Naive thymus-derived CD4-positive, alpha-beta T cell (primary cell): ENCODE measurements at regions of chr7 and their contacts with region 1.

Region 1: DNA sequence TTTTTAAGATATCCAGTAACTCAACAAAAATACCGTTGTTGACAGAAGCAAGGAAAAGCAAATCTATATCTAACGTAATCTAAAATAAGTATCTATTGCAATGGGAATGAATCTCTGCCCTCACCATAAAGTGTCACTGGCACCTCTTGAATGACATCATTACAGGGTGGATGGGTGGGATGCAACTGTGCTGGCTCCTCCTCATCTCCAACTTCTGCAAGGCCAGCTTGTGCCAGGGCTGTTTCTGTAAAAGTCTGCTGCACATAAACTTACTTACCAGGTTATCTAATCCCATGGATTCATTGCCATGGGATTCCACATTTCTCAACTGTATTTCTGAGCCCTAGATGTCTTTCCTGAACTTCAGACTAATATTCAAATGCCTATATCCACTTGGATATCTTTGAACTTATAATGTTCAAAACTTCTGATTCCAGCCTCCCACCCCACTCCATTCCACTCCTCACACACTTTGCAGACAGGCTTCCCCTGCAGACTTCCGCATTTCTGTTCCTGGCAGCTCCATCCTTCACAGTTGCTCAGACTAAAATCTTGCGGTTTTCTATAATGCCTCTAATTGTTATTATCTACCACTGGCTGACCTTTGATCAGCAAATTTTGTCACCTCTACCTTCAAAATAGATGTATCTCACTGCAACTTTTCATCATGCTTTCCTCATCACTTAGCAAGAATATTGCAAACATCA is 10.7 kb downstream of the FGL2 start:
- DNase-seq: no peak
- ATAC-seq: peak; percentile 58
- H3K4me3 ChIP-seq: no peak overlapping the region
- H3K4me3 Mint-ChIP-seq: no peak overlapping the region
- H3K27ac ChIP-seq: no peak overlapping the region
- H3K27ac Mint-ChIP-seq: no peak overlapping the region
- H3K4me1 ChIP-seq: peaks cover 6 to 7% of the 10 kb centered on the region in 2 donors
- H3K4me1 Mint-ChIP-seq: peaks cover 0 to 19% (median 15%) of the 10 kb centered on the region in 7 donors
- H3K27me3 ChIP-seq: no peaks in the 10 kb centered on the region
- H3K27me3 Mint-ChIP-seq: no peaks in the 10 kb centered on the region

Region 2: DNA sequence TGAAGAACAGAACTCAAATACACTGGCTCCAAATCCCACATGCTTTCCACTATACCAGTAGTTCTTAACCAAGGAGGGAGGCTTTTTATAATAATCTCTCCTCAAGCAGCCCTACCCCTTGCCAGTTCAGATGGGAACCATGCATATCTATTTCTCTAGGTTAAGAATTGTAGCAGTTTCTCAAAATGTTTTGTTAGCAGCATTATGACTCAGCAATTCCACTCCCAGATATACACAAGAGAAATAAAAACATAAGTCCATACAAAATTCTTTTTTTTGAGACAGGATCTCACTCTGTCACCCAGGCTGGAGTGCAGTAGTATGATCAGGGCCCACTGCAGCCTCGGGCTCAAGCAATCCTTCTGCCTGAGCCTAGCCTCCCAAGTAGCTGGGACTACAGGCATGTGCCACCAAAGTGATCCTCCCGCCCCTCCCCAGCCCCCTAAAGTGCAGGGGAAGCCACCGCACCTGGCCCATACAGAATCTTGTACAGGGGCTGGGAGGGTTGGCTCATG is 848.2 kb before region 1 on chr7:
- CTCF ChIA-PET with region 1: no interaction called
- POLR2A ChIA-PET with region 1: no interaction called
- intact Hi-C with region 1: no loop called
- DNase-seq: no peak
- ATAC-seq: no peak
- H3K4me3 ChIP-seq: no peak overlapping the region
- H3K4me3 Mint-ChIP-seq: no peak overlapping the region
- H3K27ac ChIP-seq: no peak overlapping the region
- H3K27ac Mint-ChIP-seq: peak overlapping the region in 2 of 9 donors; percentile 9 to 39
- H3K4me1 ChIP-seq: no peaks in the 10 kb centered on the region
- H3K4me1 Mint-ChIP-seq: peaks cover 54 to 80% (median 65%) of the 10 kb centered on the region in 7 donors
- H3K27me3 ChIP-seq: no peaks in the 10 kb centered on the region
- H3K27me3 Mint-ChIP-seq: no peaks in the 10 kb centered on the region

Region 3: DNA sequence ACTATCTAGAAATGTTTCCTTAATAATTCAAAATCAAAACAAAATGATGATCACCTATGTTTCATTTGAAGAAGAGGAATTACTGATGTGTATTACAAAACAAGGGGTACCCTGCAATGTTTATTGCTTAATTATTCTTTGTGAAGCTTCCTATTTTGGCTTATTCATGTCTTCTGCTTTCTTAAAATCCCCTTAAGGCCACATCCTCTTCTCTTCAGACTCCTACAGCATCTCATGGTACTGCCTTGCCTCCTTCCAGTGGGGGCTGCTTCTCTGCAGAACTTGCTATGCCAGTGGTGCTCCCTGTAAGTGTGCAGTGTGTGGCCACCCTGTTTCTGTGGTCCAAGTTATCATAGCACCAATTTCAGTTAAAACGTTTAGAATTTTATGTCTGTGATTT is 31.4 kb before region 1 on chr7:
- CTCF ChIA-PET with region 1: no interaction called
- POLR2A ChIA-PET with region 1: no interaction called
- intact Hi-C with region 1: loop called in 1 of 2 experiments (anchors 2 kb)
- DNase-seq: no peak
- ATAC-seq: peak; percentile 78
- H3K4me3 ChIP-seq: no peak overlapping the region
- H3K4me3 Mint-ChIP-seq: peak overlapping the region in 1 of 10 donors; percentile 61
- H3K27ac ChIP-seq: no peak overlapping the region
- H3K27ac Mint-ChIP-seq: peak overlapping the region in 1 of 9 donors; percentile 90
- H3K4me1 ChIP-seq: no peaks in the 10 kb centered on the region
- H3K4me1 Mint-ChIP-seq: peaks cover 0 to 24% (median 5%) of the 10 kb centered on the region in 7 donors
- H3K27me3 ChIP-seq: no peaks in the 10 kb centered on the region
- H3K27me3 Mint-ChIP-seq: no peaks in the 10 kb centered on the region